ENCODE measurements at regions of chr7 and their contacts with region 1.

Region 1: DNA sequence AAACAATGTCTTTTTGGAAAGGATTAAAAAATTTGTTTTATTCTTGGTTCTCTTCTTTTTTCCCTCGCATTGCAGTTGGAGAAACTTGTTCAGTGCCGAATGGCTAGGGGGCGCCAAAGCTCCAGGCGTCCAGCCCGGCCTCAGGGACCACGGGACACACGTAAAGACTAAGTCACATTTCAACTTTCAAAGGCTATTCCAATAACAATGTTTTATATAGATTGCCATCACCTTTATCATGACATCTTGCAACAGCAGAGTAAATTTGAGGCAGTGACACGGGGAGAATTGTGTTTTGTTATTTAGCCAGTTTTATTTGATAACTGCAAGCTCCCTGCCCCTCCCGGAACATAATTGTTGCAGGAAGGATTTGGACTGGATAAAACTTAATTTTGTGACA is 2.2 kb upstream of the IGFBP3 start:
- DNase-seq: peak in 2 of 3 donors; percentile 75 to 81
- ATAC-seq: peak; percentile 54
- H3K4me3 ChIP-seq: no peak overlapping the region
- H3K4me1 ChIP-seq: no peaks in the 10 kb centered on the region
- CTCF ChIP-seq: peak; percentile 69

Region 2: DNA sequence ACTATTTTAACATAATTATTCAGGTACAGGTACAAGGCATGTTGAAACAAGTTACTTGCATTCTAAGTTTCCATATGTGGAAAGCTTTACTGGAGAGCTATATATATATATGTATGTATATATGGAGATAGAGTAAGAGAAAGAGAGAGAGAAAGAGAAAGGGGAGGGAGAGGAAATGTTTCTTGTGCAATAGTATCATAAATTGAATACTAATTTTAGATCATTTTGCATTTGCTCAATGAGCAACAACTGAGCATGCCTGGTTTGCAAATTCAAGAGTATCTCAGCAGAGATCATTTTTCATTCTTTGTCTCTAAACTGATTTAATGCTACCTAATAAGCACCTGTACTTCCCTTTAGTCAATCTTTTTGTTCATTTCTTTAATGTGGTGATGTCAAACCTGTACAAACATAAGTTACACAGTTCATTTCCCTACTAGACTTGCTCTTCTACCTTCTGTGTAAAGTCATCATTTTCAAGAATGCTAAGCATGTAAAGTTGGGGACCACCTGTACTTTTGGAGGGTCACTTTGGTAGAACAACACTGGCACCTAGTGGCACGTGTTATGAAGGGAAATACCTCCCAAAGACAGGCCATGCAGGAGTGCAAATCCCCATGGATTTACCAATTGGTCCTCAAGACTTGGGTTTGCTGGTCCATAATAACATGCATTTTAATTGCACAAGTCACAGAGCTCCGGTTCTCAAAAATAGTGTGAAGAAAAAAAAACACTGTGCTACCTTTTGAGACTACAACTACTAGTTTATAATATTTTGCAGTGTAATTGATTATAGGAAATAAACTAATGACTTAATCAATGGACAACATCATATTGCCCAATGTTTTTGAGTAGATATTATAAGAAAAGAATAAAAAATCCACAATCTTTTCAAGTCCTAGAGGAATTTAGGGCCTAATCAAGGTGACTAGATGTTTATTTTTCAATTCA is 429.0 kb after region 1 on chr7:
- intact Hi-C with region 1: loop called in 1 of 2 experiments (anchors 5 kb)
- DNase-seq: peak in 1 of 3 donors; percentile 31
- ATAC-seq: no peak
- H3K4me3 ChIP-seq: no peak overlapping the region
- H3K4me1 ChIP-seq: no peaks in the 10 kb centered on the region
- CTCF ChIP-seq: no peak